AG04449 (cell line): ENCODE measurements at regions of chr11 and their contacts with region 1.

Region 1: GRCh38 chr11:15886866-15887265 is 469.5 kb downstream of the SOX6 start:
- DNase-seq: no peak
- H3K4me3 ChIP-seq: no peak overlapping the region
- CTCF ChIP-seq: no peak

Region 2: DNA sequence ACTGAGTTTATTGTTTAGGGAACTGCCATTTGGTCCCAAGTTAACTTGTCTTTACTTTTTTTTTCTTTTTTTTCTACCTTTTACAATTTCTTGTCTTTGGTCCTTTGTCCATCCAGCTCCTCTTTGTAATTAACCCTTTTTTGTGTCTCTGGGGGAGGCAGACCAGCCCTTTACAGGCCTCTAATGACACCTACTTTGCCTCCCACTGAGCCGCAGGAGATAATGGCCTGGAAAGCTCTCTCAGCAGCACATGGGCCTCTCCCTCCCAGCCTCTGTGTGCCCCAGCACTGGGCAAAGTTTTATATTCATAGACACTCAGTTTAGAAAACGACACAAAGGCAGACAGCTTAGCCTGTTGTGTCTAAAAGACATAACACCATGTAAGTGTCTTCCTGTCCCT is 10.9 kb before region 1 on chr11:
- CTCF ChIA-PET with region 1: interaction called, 10 read pairs
- POLR2A ChIA-PET with region 1: no interaction called
- DNase-seq: no peak
- H3K4me3 ChIP-seq: no peak overlapping the region
- CTCF ChIP-seq: no peak